ENCODE measurements at regions of chr5 and their contacts with region 1.

Region 1: DNA sequence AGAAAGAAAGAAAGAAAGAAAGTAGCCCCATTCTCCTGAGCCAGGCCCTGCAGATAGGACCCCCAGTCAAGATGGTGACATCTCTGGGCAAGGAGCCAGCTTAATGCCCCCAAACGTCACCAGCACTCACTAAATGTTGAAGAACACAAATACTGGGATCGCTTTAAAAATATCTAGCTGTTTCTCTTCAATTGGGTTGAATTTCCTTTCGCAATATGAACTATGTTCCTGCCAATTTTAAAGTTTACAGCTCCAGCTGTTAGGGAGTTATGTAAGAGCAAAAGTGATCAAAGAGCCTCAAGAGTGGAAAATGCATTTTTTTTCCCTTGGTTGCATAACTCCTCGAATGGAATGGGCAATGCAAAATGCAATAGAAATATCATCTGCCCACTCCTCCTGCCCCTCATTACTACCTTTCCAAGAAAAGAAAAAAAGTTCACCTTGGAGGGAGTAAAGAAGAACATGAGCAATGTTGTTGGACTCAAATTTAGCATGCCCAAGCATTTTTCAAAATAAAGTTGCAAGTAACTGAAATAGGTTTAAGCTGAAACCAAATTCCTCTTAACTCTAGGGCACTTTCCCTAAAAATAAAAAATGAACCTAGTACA is 244.2 kb upstream of the PIK3R1 start:
- DNase-seq: peak; percentile 23 to 51
- ATAC-seq: peak in 3 of 4 donors; percentile 37 to 74 (median 40)
- H3K4me3 ChIP-seq: no peak overlapping the region
- H3K27ac ChIP-seq: peak overlapping the region; percentile 9
- H3K4me1 ChIP-seq: peaks cover 11% of the 10 kb centered on the region
- H3K27me3 ChIP-seq: no peaks in the 10 kb centered on the region
- CTCF ChIP-seq: no peak

Region 2: GRCh38 chr5:67935908-67936566 is 35.3 kb before region 1 on chr5:
- intact Hi-C with region 1: loop called in 1 of 2 experiments (anchors 2 kb)
- DNase-seq: no peak
- ATAC-seq: no peak
- H3K4me3 ChIP-seq: no peak overlapping the region
- H3K27ac ChIP-seq: no peak overlapping the region
- H3K4me1 ChIP-seq: no peaks in the 10 kb centered on the region
- H3K27me3 ChIP-seq: no peaks in the 10 kb centered on the region
- CTCF ChIP-seq: no peak

Measured in psoas muscle (tissue), 8 donors.